Posterior vena cava (tissue), 2 donors: ENCODE measurements at regions of chr1 and their contacts with region 1.

Region 1: GRCh38 chr1:166920561-166921475 is 44.8 kb upstream of the TADA1 start:
- DNase-seq: no peak

Region 2: GRCh38 chr1:167052389-167052788 is 131.6 kb after region 1 on chr1:
- intact Hi-C with region 1: loop called in 1 of 2 experiments (anchors 2 kb)
- DNase-seq: no peak